ENCODE measurements at regions of chr9 and their contacts with region 1.

Region 1: GRCh38 chr9:5566054-5566618 is 55.8 kb downstream of the PDCD1LG2 start:
- H3K4me3 Mint-ChIP-seq: no peak overlapping the region
- H3K27ac Mint-ChIP-seq: no peak overlapping the region
- H3K4me1 Mint-ChIP-seq: peaks cover 74% of the 10 kb centered on the region
- H3K27me3 Mint-ChIP-seq: no peaks in the 10 kb centered on the region

Region 2: GRCh38 chr9:5524090-5524489 is 42.0 kb before region 1 on chr9:
- intact Hi-C with region 1: loop called (anchors 5 kb)
- H3K4me3 Mint-ChIP-seq: no peak overlapping the region
- H3K27ac Mint-ChIP-seq: peak overlapping the region; percentile 69
- H3K4me1 Mint-ChIP-seq: peaks cover 40% of the 10 kb centered on the region
- H3K27me3 Mint-ChIP-seq: no peaks in the 10 kb centered on the region

Measured in dendritic cell treated with granulocyte-macrophage colony-stimulating factor and Interleukin-4, amounts not matched to agents 40 ng/mL and 50 ng/mL, for 4 days (primary cell).